Left lung (tissue), 14 donors: ENCODE measurements at regions of chr5 and their contacts with region 1.

Region 1: DNA sequence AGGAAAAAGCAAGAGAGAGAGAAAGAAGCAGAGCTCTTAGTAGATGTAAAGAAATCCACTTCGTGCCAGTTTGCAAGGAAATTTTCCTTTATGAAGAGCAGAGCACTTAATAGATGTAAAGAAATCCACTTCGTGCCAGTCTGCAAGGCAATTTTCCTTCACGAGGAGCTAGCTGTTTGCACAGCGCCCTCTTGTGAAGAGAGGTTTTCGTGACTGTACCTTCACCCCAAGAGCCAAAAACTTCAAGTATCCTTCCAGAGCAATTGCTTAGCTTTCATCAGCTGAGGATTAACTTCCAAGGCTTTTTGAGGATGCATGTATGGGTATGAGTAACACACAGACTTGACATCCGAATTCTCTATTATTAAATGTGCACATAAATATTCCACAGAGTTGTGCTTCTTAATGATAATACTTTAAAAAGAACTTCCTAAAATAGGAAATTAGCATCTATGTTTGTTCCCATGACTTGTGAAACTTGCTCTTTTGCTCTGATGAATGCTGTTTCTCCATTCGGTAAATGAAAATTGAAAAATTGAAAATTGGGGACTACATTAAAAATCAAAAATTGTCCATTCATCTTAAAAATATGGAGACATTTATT is 525.6 kb downstream of the PDE4D start:
- DNase-seq: peak in 2 of 4 donors; percentile 52 to 83
- ATAC-seq: peak; percentile 95
- H3K4me3 ChIP-seq: no peak overlapping the region
- H3K27ac ChIP-seq: no peak overlapping the region
- H3K4me1 ChIP-seq: no peaks in the 10 kb centered on the region
- H3K27me3 ChIP-seq: no peaks in the 10 kb centered on the region
- CTCF ChIP-seq: peak; percentile 42 to 62

Region 2: DNA sequence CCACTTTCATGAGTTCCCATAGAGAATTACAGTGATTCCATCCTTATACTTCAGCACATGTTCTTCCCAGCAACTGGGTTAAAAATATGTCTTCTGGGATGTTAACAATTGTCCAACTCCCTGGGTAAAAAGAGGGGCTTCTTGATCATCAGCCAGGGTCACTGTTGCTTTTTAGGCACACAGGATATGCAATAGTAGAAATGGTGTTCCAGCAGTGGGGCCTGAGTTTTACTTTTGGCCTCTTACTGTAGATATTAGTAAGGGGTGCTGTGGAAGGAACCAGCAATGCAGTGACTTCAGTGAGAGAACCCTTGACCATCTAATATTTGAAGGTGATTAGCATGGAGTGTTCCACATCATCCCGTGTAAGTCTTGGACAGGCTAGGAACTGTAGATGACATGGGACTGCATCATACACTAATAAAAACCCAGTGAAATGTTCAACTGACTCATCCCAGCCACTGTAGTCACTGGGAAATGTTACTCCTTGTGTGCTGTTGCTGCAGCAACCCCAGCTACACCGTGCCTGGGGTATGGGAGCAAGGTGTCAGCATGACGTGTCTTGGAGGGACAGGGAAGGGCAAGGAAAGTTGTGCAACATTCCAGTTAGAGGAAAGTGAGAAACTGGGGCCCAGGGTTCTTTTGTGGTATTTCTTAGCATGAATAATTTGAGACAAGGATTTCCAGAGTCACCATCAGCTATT is 174.1 kb before region 1 on chr5:
- intact Hi-C with region 1: loop called in 1 of 2 experiments (anchors 5 kb)
- DNase-seq: peak in 2 of 4 donors; percentile 48 to 71
- ATAC-seq: peak; percentile 83
- H3K4me3 ChIP-seq: no peak overlapping the region
- H3K27ac ChIP-seq: no peak overlapping the region
- H3K4me1 ChIP-seq: peaks cover 0 to 12% of the 10 kb centered on the region in 2 donors
- H3K27me3 ChIP-seq: no peaks in the 10 kb centered on the region
- CTCF ChIP-seq: no peak

Region 3: GRCh38 chr5:59218424-59219045 is 149.4 kb before region 1 on chr5:
- intact Hi-C with region 1: loop called in 1 of 2 experiments (anchors 10 kb)
- DNase-seq: no peak
- ATAC-seq: no peak
- H3K4me3 ChIP-seq: no peak overlapping the region
- H3K27ac ChIP-seq: no peak overlapping the region
- H3K4me1 ChIP-seq: no peaks in the 10 kb centered on the region
- H3K27me3 ChIP-seq: no peaks in the 10 kb centered on the region
- CTCF ChIP-seq: peak in 1 of 2 donors; percentile 40